ENCODE measurements at regions of chr17 and their contacts with region 1.

Region 1: GRCh38 chr17:35432176-35433074 is at the start of gene SLFN12:
- DNase-seq: peak in 8 of 9 experiments; percentile 8 to 87 (median 50)
- ATAC-seq: peak; percentile 86
- H3K4me3 ChIP-seq: peak within 1 kb of the TSS; percentile 59 to 91
- H3K4me3 Mint-ChIP-seq: peak within 1 kb of the TSS; percentile 91
- H3K27ac ChIP-seq: peak within 1 kb of the TSS; percentile 42
- H3K27ac Mint-ChIP-seq: peak within 1 kb of the TSS; percentile 90
- H3K4me1 ChIP-seq: peaks cover 37% of the 10 kb centered on the region
- H3K4me1 Mint-ChIP-seq: peaks cover 46% of the 10 kb centered on the region
- H3K27me3 ChIP-seq: no peaks in the 10 kb centered on the region
- H3K27me3 Mint-ChIP-seq: no peaks in the 10 kb centered on the region
- CTCF ChIP-seq: no peak
- total RNA-seq, gene SLFN12: 2.4 TPM

Region 2: DNA sequence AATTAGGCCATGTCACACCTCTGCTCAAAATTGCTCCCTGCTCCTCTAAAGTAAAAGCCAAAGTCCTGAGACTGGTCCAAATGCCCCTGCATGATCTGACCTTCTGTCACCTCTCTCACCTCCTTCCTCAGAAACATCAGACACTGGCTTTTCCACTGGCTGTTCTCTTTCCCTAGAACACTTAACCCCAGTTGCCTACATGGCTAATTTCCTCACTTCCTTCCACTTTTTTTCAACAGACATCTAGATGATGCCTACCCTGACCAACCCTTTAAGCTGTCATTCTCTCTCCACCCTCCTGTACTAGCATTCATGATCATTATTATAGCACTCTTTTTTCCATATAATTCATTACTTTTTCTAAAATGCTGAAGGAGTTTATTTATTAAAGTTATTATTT is 502.1 kb before region 1 on chr17:
- CTCF ChIA-PET with region 1: no interaction called
- POLR2A ChIA-PET with region 1: no interaction called
- intact Hi-C with region 1: no loop called
- DNase-seq: no peak
- ATAC-seq: no peak
- H3K4me3 ChIP-seq: no peak overlapping the region
- H3K4me3 Mint-ChIP-seq: no peak overlapping the region
- H3K27ac ChIP-seq: no peak overlapping the region
- H3K27ac Mint-ChIP-seq: no peak overlapping the region
- H3K4me1 ChIP-seq: no peaks in the 10 kb centered on the region
- H3K4me1 Mint-ChIP-seq: no peaks in the 10 kb centered on the region
- H3K27me3 ChIP-seq: no peaks in the 10 kb centered on the region
- H3K27me3 Mint-ChIP-seq: no peaks in the 10 kb centered on the region
- CTCF ChIP-seq: no peak

Region 3: GRCh38 chr17:35170968-35171771 is 261.3 kb before region 1 on chr17:
- CTCF ChIA-PET with region 1: no interaction called
- POLR2A ChIA-PET with region 1: no interaction called
- intact Hi-C with region 1: loop called in 1 of 2 experiments (anchors 5 kb)
- DNase-seq: peak in 5 of 9 experiments; percentile 31 to 70 (median 62)
- ATAC-seq: peak; percentile 79
- H3K4me3 ChIP-seq: peak overlapping the region; percentile 10 to 31
- H3K4me3 Mint-ChIP-seq: peak overlapping the region; percentile 57
- H3K27ac ChIP-seq: peak overlapping the region in 1 of 2 experiments; percentile 51
- H3K27ac Mint-ChIP-seq: peak overlapping the region; percentile 90
- H3K4me1 ChIP-seq: peaks cover 37% of the 10 kb centered on the region
- H3K4me1 Mint-ChIP-seq: peaks cover 46% of the 10 kb centered on the region
- H3K27me3 ChIP-seq: no peaks in the 10 kb centered on the region
- H3K27me3 Mint-ChIP-seq: no peaks in the 10 kb centered on the region
- CTCF ChIP-seq: peak; percentile 69

Region 4: GRCh38 chr17:35373534-35373983 is 58.9 kb before region 1 on chr17 and contains the start of gene SLFN11:
- CTCF ChIA-PET with region 1: no interaction called
- POLR2A ChIA-PET with region 1: no interaction called
- intact Hi-C with region 1: loop called (anchors 1 to 5 kb)
- DNase-seq: peak; percentile 63 to 95 (median 78)
- ATAC-seq: peak; percentile 88
- H3K4me3 ChIP-seq: peak within 1 kb of the TSS; percentile 85 to 95
- H3K4me3 Mint-ChIP-seq: peak within 1 kb of the TSS; percentile 99
- H3K27ac ChIP-seq: peak within 1 kb of the TSS; percentile 83 to 99
- H3K27ac Mint-ChIP-seq: peak within 1 kb of the TSS; percentile 98
- H3K4me1 ChIP-seq: peaks cover 19% of the 10 kb centered on the region
- H3K4me1 Mint-ChIP-seq: peaks cover 52% of the 10 kb centered on the region
- H3K27me3 ChIP-seq: no peaks in the 10 kb centered on the region
- H3K27me3 Mint-ChIP-seq: no peaks in the 10 kb centered on the region
- CTCF ChIP-seq: no peak
- total RNA-seq, gene SLFN11: 25.6 to 27.2 TPM

Region 5: GRCh38 chr17:35448214-35448898 is 15.9 kb after region 1 on chr17 and contains the start of gene SLFN13:
- CTCF ChIA-PET with region 1: no interaction called
- POLR2A ChIA-PET with region 1: no interaction called
- intact Hi-C with region 1: loop called in 1 of 2 experiments (anchors 2 kb)
- DNase-seq: peak; percentile 58 to 93 (median 84)
- ATAC-seq: peak; percentile 90
- H3K4me3 ChIP-seq: peak within 1 kb of the TSS; percentile 57 to 70
- H3K4me3 Mint-ChIP-seq: peak within 1 kb of the TSS; percentile 87
- H3K27ac ChIP-seq: peak within 1 kb of the TSS; percentile 51 to 58
- H3K27ac Mint-ChIP-seq: peak within 1 kb of the TSS; percentile 93
- H3K4me1 ChIP-seq: peaks cover 16% of the 10 kb centered on the region
- H3K4me1 Mint-ChIP-seq: peaks cover 19% of the 10 kb centered on the region
- H3K27me3 ChIP-seq: no peaks in the 10 kb centered on the region
- H3K27me3 Mint-ChIP-seq: no peaks in the 10 kb centered on the region
- CTCF ChIP-seq: no peak
- total RNA-seq, gene SLFN13: 16.1 to 17.3 TPM

Region 6: GRCh38 chr17:35460354-35460851 is 28.0 kb after region 1 on chr17:
- CTCF ChIA-PET with region 1: no interaction called
- POLR2A ChIA-PET with region 1: no interaction called
- intact Hi-C with region 1: loop called in 1 of 2 experiments (anchors 2 kb)
- DNase-seq: peak; percentile 40 to 89 (median 75)
- ATAC-seq: peak; percentile 92
- H3K4me3 ChIP-seq: peak overlapping the region; percentile 27 to 33
- H3K4me3 Mint-ChIP-seq: peak overlapping the region; percentile 77
- H3K27ac ChIP-seq: peak overlapping the region; percentile 42 to 64
- H3K27ac Mint-ChIP-seq: peak overlapping the region; percentile 93
- H3K4me1 ChIP-seq: peaks cover 17% of the 10 kb centered on the region
- H3K4me1 Mint-ChIP-seq: peaks cover 22% of the 10 kb centered on the region
- H3K27me3 ChIP-seq: no peaks in the 10 kb centered on the region
- H3K27me3 Mint-ChIP-seq: no peaks in the 10 kb centered on the region
- CTCF ChIP-seq: no peak

Measured in CD8-positive, alpha-beta T cell (primary cell).